ENCODE measurements at regions of chr14 and their contacts with region 1.

Region 1: DNA sequence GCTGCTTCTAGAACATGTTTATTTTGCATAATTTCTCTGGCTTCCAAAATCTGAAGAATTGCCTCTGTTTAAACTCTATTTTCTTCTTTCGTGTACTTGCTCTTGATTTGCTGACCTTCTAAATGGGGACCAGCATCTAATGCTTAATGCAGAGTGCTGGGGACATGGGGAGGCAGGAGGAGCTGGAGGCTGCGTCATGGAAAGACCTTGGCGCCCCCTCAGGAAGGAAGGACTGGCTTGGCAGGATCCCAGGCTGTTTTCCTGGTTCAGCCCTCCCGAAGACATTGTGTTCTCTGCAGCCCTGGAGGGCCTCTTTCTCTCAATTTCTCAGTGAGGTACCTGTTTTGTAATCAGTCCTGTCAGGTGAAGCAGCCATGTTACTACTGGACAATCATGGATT is 5.5 kb downstream of the PRKCH start:
- DNase-seq: peak; percentile 69
- H3K4me3 Mint-ChIP-seq: peak overlapping the region; percentile 87
- H3K27ac Mint-ChIP-seq: peak overlapping the region; percentile 90
- H3K4me1 Mint-ChIP-seq: peaks cover 59% of the 10 kb centered on the region
- H3K27me3 Mint-ChIP-seq: no peaks in the 10 kb centered on the region

Region 2: DNA sequence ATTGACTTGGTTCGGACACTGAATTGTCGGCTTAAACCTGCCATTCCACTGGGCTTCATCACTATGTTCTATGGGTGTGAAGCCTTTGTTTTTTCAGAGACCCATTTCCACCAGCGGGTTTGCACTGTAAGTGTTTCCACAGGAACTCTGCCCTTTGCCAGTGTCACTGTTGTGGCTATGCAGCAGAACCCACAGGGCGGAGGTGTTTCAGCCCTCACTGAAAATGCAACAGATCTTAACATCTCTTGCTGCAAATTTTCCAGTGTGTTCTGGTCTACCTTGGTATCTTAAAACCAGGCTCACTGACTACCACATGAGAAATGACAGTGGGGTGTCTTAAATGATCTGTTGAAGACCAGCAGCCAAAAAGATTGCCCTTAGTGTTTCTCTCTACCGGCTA is 15.6 kb after region 1 on chr14:
- intact Hi-C with region 1: loop called (anchors 1 kb)
- DNase-seq: peak; percentile 96
- H3K4me3 Mint-ChIP-seq: peak overlapping the region; percentile 86
- H3K27ac Mint-ChIP-seq: peak overlapping the region; percentile 95
- H3K4me1 Mint-ChIP-seq: peaks cover 80% of the 10 kb centered on the region
- H3K27me3 Mint-ChIP-seq: no peaks in the 10 kb centered on the region

Measured in activated CD4-positive, alpha-beta T cell treated with anti-CD3 and anti-CD28 coated beads, Interleukin-2, amount 10 ng/mL, durations not matched to agents 24 days and 14 days (primary cell).